ENCODE measurements at regions of chr17 and their contacts with region 1.

Region 1: GRCh38 chr17:61837175-61838051 is 25.9 kb downstream of the BRIP1 start:
- DNase-seq: peak; percentile 82
- H3K4me3 Mint-ChIP-seq: no peak overlapping the region
- H3K27ac Mint-ChIP-seq: no peak overlapping the region
- H3K4me1 Mint-ChIP-seq: no peaks in the 10 kb centered on the region
- H3K27me3 Mint-ChIP-seq: no peaks in the 10 kb centered on the region
- CTCF ChIP-seq: peak; percentile 75

Region 2: DNA sequence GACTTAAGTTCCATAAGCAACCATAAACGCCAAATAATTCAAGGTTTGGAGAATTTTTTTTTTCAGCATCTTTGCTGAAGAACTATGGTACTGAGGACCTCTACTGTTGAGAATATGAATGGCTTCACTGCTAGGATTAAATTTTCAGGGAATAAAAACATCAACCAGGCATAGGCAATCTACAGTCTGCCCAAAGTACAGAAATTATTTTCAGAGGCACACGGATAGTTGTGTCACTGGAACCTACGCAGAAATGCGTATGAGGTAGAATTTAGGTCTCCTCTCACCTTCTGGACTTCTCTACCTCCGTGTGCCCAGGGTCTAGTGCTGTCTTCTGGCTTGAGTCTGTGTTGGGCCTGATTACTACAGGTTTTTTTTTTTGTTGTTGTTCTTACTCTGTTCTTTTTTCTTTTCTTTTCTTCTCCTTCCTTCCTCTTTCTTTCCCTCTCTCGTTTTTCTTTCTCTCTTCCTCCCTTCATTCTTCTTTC is 286.1 kb before region 1 on chr17:
- CTCF ChIA-PET with region 1: interaction called, 4 read pairs
- POLR2A ChIA-PET with region 1: no interaction called
- intact Hi-C with region 1: loop called (anchors 5 kb)
- DNase-seq: peak; percentile 54
- H3K4me3 Mint-ChIP-seq: no peak overlapping the region
- H3K27ac Mint-ChIP-seq: no peak overlapping the region
- H3K4me1 Mint-ChIP-seq: no peaks in the 10 kb centered on the region
- H3K27me3 Mint-ChIP-seq: peaks cover 42% of the 10 kb centered on the region
- CTCF ChIP-seq: peak; percentile 66

Region 3: DNA sequence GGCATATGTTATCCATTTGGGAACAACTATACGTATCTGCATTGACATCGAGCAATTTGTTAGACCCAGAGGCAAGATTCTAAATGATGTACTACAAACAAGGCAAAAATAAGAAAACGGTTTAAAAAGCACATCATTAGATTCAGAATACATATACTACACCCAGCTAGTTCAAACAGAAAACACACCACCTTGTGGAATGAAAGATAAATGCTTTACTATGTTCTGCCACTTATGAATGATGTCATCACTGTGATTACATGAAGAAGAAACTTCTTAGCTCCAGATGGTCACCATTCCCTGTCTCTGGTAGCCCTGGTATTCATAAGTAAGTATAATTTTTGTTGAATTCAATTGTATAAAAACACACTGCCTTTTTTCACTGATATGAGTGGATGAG is 254.2 kb before region 1 on chr17:
- CTCF ChIA-PET with region 1: interaction called, 6 read pairs
- POLR2A ChIA-PET with region 1: no interaction called
- intact Hi-C with region 1: loop called (anchors 5 kb)
- DNase-seq: peak; percentile 60
- H3K4me3 Mint-ChIP-seq: no peak overlapping the region
- H3K27ac Mint-ChIP-seq: no peak overlapping the region
- H3K4me1 Mint-ChIP-seq: no peaks in the 10 kb centered on the region
- H3K27me3 Mint-ChIP-seq: no peaks in the 10 kb centered on the region
- CTCF ChIP-seq: no peak

Region 4: DNA sequence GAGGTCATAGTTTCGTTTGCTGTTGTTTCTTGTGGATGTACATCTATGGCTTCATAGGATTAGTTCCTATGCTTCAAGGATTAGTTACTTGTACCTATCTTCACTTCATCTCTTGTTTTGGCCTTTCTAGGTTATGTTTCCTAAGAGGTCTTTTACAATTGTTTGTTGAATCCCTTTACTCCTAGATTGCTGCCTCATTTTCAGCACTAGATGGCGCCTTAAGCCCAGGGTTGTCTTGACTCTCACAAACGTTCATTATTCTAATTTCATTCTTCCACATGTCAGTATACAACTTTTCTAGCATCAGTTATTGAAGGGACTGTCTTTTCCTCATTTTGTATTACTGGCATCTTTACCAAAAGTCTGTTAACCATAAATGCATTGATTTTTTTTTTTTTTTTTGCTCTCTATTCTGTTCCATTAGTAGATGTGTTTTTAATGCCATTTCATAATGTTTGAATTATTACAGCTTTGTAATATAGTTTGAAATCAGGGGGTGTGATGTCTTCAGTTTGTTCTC is 201.4 kb before region 1 on chr17:
- CTCF ChIA-PET with region 1: interaction called, 59 read pairs
- POLR2A ChIA-PET with region 1: interaction called, 5 read pairs
- intact Hi-C with region 1: loop called (anchors 1 kb)
- DNase-seq: peak; percentile 75
- H3K4me3 Mint-ChIP-seq: no peak overlapping the region
- H3K27ac Mint-ChIP-seq: no peak overlapping the region
- H3K4me1 Mint-ChIP-seq: no peaks in the 10 kb centered on the region
- H3K27me3 Mint-ChIP-seq: no peaks in the 10 kb centered on the region
- CTCF ChIP-seq: peak; percentile 80

Region 5: DNA sequence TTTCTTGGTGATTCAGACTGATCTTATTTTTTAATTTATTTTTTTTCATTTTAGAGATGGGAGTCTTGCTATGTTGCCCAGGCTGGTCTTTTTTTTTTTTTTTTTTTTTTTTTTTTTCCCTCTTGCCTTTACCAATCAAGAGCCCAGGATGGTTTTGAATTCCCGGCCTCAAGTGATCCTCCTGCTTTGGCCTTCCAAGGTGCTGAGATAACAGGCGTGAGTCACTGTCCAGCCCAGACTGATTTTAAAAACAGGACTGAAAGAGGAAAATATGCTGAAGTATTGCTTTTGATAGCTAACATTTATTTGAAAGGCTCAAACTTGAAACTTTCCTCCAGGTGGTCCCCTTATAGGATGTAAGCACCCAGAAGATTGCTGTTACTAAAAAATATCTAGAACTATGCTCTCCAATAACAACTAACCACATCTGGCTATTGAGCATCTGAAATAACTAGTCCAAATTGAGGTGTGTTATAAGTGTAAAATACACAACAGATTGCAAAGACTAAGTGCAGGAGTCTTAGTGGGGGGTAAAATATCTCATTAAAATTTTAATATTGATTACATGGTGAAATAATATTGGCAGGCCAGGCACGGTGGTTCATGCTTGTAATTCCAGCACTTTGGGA is 41.7 kb after region 1 on chr17:
- CTCF ChIA-PET with region 1: no interaction called
- POLR2A ChIA-PET with region 1: no interaction called
- intact Hi-C with region 1: no loop called
- DNase-seq: no peak
- H3K4me3 Mint-ChIP-seq: no peak overlapping the region
- H3K27ac Mint-ChIP-seq: no peak overlapping the region
- H3K4me1 Mint-ChIP-seq: no peaks in the 10 kb centered on the region
- H3K27me3 Mint-ChIP-seq: no peaks in the 10 kb centered on the region
- CTCF ChIP-seq: no peak

Measured in MCF 10A (cell line).